Mammary epithelial cell (primary cell): ENCODE measurements at regions of chr6 and their contacts with region 1.

Region 1: DNA sequence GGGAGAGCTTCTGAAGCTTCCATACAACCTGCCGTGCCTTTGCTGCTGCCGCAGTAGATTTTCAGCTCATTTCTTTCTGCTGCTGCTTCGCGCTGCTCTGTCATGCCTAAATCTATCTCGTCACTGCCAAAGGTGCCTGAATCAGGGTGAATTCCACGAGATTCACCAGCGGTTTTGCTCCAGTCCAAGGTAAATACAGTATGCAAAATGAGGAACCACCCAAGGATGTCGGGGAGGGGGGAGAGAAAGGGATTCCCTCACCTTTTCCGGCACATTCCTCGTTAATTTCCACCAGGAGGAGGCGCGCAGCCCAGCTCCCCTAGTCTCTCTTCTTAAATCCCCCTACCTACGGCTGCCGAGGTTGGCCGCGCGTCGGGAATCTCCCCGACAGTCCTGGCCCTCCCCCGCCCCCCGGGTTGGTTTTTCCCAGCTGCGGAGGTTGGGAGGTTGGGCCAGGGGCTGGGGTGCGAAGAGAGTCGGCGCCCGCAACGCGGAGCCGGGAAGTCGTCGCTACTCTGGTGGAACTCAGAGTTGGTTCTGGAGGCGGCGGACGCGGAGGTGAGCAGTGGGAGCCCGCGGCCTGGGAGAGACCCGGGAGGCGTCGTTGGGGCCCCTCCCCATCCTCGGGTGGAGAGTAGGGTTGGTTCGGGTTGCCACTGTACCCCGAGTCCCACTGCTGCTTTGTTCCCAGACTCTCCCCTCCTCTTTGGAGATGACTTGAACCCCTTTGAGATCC is at the start of gene TPBG:
- DNase-seq: peak; percentile 88
- H3K4me3 ChIP-seq: peak within 1 kb of the TSS; percentile 72 to 99 (median 89)
- H3K27ac ChIP-seq: peak within 1 kb of the TSS; percentile 82
- H3K4me1 ChIP-seq: peaks cover 27% of the 10 kb centered on the region
- H3K27me3 ChIP-seq: no peaks in the 10 kb centered on the region
- CTCF ChIP-seq: peak in 1 of 2 donors; percentile 42
- total RNA-seq, gene TPBG: 62.8 to 115 TPM

Region 2: DNA sequence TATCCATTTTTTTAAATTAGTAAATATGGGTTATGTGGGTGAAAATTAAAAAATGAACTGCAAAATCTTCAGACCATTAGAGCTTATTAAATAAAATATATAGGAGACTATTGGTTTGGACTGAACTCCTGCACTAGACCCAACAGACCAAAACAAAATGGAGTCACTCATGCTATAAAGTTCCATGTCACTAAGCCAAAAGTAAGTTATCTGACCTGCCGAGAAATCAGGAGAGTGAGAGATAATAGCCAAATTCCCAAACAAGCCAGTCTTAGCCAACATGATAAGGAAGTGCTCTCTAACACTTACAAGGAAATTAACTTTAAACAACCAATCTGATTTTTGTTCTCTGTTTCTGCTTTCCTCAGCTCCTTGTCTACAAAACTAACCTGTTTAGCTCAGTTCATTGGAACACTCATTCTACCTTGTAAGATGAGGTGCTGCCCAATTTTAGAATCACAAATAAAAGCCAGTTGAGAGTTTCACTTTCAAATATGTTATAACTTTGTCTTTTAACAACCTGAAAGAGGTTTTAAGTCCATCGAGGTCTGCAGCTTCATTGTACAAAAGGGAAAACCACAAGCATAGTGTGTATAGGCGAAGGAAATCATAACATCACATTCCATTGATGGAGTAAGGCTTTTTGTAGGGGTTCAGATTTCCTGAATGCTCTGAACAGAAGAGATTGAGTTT is 831.5 kb before region 1 on chr6:
- CTCF ChIA-PET with region 1: no interaction called
- dilution Hi-C with region 1: no loop called
- in situ Hi-C with region 1: no loop called
- intact Hi-C with region 1: no loop called
- DNase-seq: no peak
- H3K4me3 ChIP-seq: no peak overlapping the region
- H3K27ac ChIP-seq: no peak overlapping the region
- H3K4me1 ChIP-seq: no peaks in the 10 kb centered on the region
- H3K27me3 ChIP-seq: peaks cover 2% of the 10 kb centered on the region
- CTCF ChIP-seq: no peak

Region 3: GRCh38 chr6:82270881-82271645 is 92.5 kb before region 1 on chr6:
- CTCF ChIA-PET with region 1: interaction called, 3 read pairs
- dilution Hi-C with region 1: no loop called
- in situ Hi-C with region 1: no loop called
- intact Hi-C with region 1: loop called (anchors 2 kb)
- DNase-seq: peak; percentile 21
- H3K4me3 ChIP-seq: no peak overlapping the region
- H3K27ac ChIP-seq: no peak overlapping the region
- H3K4me1 ChIP-seq: peaks cover 15% of the 10 kb centered on the region
- H3K27me3 ChIP-seq: no peaks in the 10 kb centered on the region
- CTCF ChIP-seq: peak; percentile 54 to 60

Region 4: GRCh38 chr6:82396964-82397751 is 33.6 kb after region 1 on chr6:
- CTCF ChIA-PET with region 1: no interaction called
- dilution Hi-C with region 1: loop called (anchors 5 kb)
- in situ Hi-C with region 1: no loop called
- intact Hi-C with region 1: loop called (anchors 2 kb)
- DNase-seq: peak; percentile 96
- H3K4me3 ChIP-seq: peak overlapping the region in 1 of 3 experiments; percentile 24
- H3K27ac ChIP-seq: peak overlapping the region; percentile 77
- H3K4me1 ChIP-seq: peaks cover 31% of the 10 kb centered on the region
- H3K27me3 ChIP-seq: no peaks in the 10 kb centered on the region
- CTCF ChIP-seq: no peak

Region 5: GRCh38 chr6:82458147-82458546 is 94.6 kb after region 1 on chr6:
- CTCF ChIA-PET with region 1: no interaction called
- dilution Hi-C with region 1: no loop called
- in situ Hi-C with region 1: no loop called
- intact Hi-C with region 1: loop called (anchors 1 kb)
- DNase-seq: peak; percentile 99
- H3K4me3 ChIP-seq: no peak overlapping the region
- H3K27ac ChIP-seq: peak overlapping the region; percentile 58
- H3K4me1 ChIP-seq: peaks cover 17% of the 10 kb centered on the region
- H3K27me3 ChIP-seq: no peaks in the 10 kb centered on the region
- CTCF ChIP-seq: no peak

Region 6: GRCh38 chr6:82541306-82541705 is 177.8 kb after region 1 on chr6:
- CTCF ChIA-PET with region 1: interaction called, 13 read pairs
- dilution Hi-C with region 1: no loop called
- in situ Hi-C with region 1: no loop called
- intact Hi-C with region 1: loop called (anchors 2 kb)
- DNase-seq: no peak
- H3K4me3 ChIP-seq: no peak overlapping the region
- H3K27ac ChIP-seq: no peak overlapping the region
- H3K4me1 ChIP-seq: no peaks in the 10 kb centered on the region
- H3K27me3 ChIP-seq: no peaks in the 10 kb centered on the region
- CTCF ChIP-seq: no peak

Region 7: DNA sequence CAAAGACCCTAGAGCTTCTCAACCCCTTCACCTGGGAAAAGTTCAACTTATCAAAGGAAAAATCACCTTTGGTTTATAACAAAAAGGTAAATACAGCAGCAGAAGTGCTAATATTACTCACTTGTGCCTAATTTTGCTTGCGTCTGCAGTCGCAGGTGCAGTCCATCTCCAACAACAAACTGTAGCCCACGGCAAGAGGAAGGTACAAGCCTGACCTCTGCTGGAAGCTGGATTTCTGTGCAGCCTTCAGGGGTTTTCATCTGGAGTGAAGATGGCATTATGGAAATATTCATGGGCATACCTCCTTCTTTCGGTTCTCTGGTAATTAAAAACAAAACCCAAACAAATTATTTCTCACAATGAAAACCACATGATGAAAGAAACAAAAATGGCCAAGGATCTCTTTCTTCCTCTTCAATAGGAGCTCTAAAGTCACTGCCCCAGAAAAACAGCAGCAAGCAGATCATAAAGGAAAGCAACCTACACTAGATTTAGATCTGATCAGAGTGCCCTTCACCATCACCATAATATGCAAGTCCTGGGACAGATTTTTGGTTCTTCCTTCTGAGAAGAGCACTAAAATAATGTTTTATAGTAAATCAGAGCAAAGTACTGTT is 694.3 kb after region 1 on chr6:
- CTCF ChIA-PET with region 1: no interaction called
- dilution Hi-C with region 1: no loop called
- in situ Hi-C with region 1: loop called in 1 of 2 experiments (anchors 10 kb)
- intact Hi-C with region 1: loop called (anchors 1 kb)
- DNase-seq: peak; percentile 37
- H3K4me3 ChIP-seq: no peak overlapping the region
- H3K27ac ChIP-seq: no peak overlapping the region
- H3K4me1 ChIP-seq: no peaks in the 10 kb centered on the region
- H3K27me3 ChIP-seq: no peaks in the 10 kb centered on the region
- CTCF ChIP-seq: peak; percentile 78 to 81